Activated CD8-positive, alpha-beta memory T cell treated with anti-CD3 and anti-CD28 coated beads, Interleukin-2, amount 10 ng/mL, durations not matched to agents 7 days and 5 days (primary cell): ENCODE measurements at regions of chr7 and their contacts with region 1.

Region 1: DNA sequence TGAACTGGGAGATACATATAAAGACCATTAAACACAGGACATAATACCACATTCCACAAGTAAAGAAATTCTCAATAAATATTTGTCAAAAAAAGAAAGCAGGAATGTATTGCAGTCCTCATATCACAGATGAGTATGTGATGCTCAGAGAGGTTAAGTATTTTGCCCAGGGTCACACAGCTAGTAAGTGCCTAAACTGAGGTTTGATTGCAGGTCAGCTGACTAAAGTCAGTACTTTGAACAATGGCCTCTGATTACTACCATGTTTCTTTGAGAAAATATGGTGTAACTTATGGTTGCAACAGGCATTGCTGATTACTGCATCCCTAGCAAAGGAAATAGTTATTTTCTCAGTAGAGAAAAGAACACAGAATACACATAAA is 267.1 kb downstream of the ELMO1 start:
- DNase-seq: no peak
- ATAC-seq: no peak
- H3K4me3 Mint-ChIP-seq: no peak overlapping the region
- H3K27ac Mint-ChIP-seq: no peak overlapping the region
- H3K4me1 Mint-ChIP-seq: peaks cover 15% of the 10 kb centered on the region
- H3K27me3 Mint-ChIP-seq: no peaks in the 10 kb centered on the region

Region 2: GRCh38 chr7:36440880-36441279 is 740.7 kb before region 1 on chr7:
- CTCF ChIA-PET with region 1: interaction called, 10 read pairs
- DNase-seq: no peak
- ATAC-seq: no peak
- H3K4me3 Mint-ChIP-seq: no peak overlapping the region
- H3K27ac Mint-ChIP-seq: no peak overlapping the region
- H3K4me1 Mint-ChIP-seq: no peaks in the 10 kb centered on the region
- H3K27me3 Mint-ChIP-seq: no peaks in the 10 kb centered on the region

Region 3: DNA sequence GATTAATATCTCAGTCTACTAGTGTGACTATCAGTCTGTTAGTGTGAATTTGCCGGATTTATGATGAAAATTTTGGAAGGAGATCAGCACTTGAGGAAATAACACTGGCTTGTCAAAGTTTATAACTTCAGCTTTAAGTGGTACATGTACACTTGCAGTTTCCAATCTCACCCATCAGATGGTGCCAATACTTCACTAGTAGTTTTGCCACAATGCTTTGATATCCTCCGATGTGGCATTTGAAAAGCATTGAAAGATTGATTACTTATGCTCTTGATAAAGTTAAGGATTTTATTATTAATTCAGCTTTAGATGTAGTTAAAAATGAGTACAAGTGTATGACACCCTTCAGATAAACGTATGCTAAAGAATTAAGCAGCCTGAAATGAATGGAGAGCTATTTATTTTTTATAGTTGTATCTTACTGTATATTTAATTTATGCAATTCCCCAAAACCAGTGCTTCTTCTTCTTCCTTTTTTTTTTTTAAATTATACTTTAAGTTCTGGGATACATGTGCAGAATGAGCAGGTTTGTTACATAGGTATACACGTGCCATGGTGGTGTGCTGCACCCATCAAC is 693.7 kb before region 1 on chr7:
- CTCF ChIA-PET with region 1: interaction called, 87 read pairs
- DNase-seq: peak; percentile 57
- ATAC-seq: peak; percentile 70
- H3K4me3 Mint-ChIP-seq: no peak overlapping the region
- H3K27ac Mint-ChIP-seq: no peak overlapping the region
- H3K4me1 Mint-ChIP-seq: peaks cover 2% of the 10 kb centered on the region
- H3K27me3 Mint-ChIP-seq: peaks cover 3% of the 10 kb centered on the region

Region 4: GRCh38 chr7:36670585-36671431 is 510.7 kb before region 1 on chr7:
- CTCF ChIA-PET with region 1: interaction called, 17 read pairs
- DNase-seq: peak; percentile 82
- ATAC-seq: peak; percentile 88
- H3K4me3 Mint-ChIP-seq: no peak overlapping the region
- H3K27ac Mint-ChIP-seq: peak overlapping the region; percentile 65
- H3K4me1 Mint-ChIP-seq: peaks cover 43% of the 10 kb centered on the region
- H3K27me3 Mint-ChIP-seq: no peaks in the 10 kb centered on the region

Region 5: DNA sequence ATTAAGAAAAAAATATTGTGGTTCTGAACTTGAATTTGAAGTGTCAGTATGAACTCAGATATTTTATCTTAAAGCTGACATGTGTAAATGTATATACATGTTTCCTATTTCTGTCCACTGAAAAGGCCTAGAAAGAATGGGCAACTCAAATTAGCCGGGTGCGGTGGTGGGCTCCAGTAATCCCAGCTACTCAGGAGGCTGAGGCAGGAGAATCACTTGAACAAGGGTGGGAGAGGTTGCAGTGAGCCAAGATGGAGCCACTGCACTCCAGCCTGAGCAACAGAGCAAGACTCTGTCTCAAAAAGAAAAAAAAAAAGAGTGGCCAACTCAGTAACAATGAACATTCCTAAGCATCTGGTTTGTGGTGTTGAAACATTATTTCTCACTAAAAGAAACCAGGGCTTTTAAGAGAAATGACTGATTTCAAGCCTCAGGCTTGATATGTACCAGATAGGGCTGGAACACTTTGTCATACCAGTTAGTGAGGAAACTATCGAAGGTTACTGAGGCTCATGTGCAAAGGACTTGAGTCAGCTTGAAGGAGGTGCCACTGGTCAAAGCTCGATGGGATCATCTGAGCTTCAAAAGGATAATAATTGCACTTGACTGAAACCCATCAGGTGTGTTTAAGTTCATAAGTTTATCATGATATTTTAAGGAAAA is 497.7 kb before region 1 on chr7:
- CTCF ChIA-PET with region 1: interaction called, 29 read pairs
- DNase-seq: peak; percentile 52
- ATAC-seq: peak; percentile 81
- H3K4me3 Mint-ChIP-seq: no peak overlapping the region
- H3K27ac Mint-ChIP-seq: peak overlapping the region; percentile 88
- H3K4me1 Mint-ChIP-seq: peaks cover 70% of the 10 kb centered on the region
- H3K27me3 Mint-ChIP-seq: no peaks in the 10 kb centered on the region

Region 6: GRCh38 chr7:37056234-37056912 is 125.2 kb before region 1 on chr7:
- CTCF ChIA-PET with region 1: no interaction called
- DNase-seq: no peak
- ATAC-seq: no peak
- H3K4me3 Mint-ChIP-seq: no peak overlapping the region
- H3K27ac Mint-ChIP-seq: no peak overlapping the region
- H3K4me1 Mint-ChIP-seq: no peaks in the 10 kb centered on the region
- H3K27me3 Mint-ChIP-seq: no peaks in the 10 kb centered on the region

Region 7: GRCh38 chr7:37201003-37201875 is 19.7 kb after region 1 on chr7:
- CTCF ChIA-PET with region 1: interaction called, 63 read pairs
- DNase-seq: peak; percentile 62
- ATAC-seq: peak; percentile 56
- H3K4me3 Mint-ChIP-seq: no peak overlapping the region
- H3K27ac Mint-ChIP-seq: no peak overlapping the region
- H3K4me1 Mint-ChIP-seq: peaks cover 11% of the 10 kb centered on the region
- H3K27me3 Mint-ChIP-seq: no peaks in the 10 kb centered on the region